Activated naive CD8-positive, alpha-beta T cell treated with anti-CD3 and anti-CD28 coated beads, Interleukin-2, amount 10 ng/mL, durations not matched to agents 7 days and 5 days (primary cell): ENCODE measurements at regions of chr1 and their contacts with region 1.

Region 1: DNA sequence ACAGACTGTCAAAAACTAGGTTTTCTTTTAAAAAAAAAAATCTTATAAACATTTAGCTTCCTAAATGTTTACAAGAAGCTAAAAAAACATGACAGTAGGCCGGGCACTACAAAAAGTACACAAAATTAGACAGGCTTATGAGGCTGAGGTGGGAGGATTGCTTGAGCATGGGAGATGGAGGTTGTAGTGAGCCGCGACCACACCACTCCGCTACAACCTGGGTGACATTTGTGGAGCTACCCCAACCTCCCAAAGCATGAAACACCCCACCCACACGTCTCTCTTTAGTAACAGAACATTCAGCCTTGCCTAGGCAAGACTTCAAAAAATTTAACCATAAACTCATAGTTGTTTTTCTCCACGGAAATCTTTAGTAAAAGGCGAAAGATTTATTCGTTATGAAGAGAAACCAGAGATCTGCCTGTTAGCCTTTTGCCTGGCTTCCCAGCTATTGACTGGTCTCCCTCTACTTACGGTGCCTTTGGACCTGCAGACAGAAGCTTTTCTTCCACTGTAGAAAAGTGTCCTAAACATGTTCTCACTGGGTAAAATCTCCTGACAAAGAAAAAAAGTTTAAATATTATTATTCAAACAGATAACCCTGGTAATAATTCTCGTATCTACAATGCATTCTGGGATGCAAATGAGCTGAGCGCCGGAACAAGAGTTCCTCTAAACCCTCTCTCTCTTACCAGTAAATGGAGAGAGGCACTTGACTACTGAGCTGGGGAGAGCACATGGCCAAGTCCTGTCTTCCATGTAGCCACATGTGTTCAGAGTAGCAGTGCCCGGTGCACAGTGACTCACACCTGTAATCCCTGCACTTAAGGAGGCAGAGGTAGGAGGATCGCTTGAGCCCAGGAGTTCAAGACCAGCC is 9.2 kb downstream of the RNU5D-1 start:
- DNase-seq: peak; percentile 65
- ATAC-seq: peak; percentile 89
- H3K4me3 Mint-ChIP-seq: peak overlapping the region; percentile 61
- H3K27ac Mint-ChIP-seq: peak overlapping the region; percentile 94
- H3K4me1 Mint-ChIP-seq: peaks cover 60% of the 10 kb centered on the region
- H3K27me3 Mint-ChIP-seq: no peaks in the 10 kb centered on the region

Region 2: DNA sequence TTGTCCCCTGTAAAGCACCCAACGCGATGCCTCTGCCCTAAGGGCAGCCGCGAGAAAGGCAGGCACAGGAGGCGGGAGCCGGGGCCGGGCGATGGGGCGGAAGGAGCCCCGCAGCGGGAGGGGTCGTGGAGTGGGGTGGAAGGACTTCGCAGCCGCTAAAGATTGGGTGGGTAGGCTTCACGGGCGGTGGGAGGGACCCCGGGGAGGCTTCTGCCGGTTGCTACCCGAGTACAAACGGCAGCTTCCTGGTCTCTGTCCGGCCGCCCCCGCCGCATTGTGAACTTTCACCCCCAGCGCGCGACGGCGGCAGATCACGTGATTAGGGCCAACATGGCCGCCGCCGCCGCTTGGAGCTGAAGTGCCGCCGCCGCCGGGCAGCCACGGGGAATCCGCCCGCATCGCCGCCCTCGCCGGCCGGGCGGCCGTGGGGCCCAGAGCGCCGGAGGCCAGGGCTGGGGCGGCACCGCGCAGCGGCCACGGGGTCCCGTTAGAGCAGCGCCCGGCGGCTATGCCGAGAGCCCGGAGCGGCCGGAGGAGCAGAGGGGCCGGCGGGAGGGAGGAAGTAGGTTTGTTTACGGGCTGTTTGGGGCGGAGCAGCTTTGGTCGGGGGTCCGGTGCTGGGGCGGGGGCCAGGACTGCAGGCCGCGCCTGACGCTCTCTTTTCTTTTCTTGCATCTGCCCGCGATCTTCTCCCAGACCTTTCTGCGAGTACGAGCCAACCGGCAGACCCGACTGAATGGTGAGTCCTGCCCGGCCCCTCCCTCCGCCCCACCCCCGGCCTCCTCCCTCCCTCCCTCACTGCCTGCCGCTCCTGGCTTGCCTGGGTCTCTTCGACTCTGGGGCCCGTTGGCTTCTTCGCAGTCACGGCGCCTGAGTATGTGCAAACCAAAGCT is 89.8 kb before region 1 on chr1:
- POLR2A ChIA-PET with region 1: interaction called, 23 read pairs
- DNase-seq: peak; percentile 95
- ATAC-seq: peak; percentile 76
- H3K4me3 Mint-ChIP-seq: peak overlapping the region; percentile 93
- H3K27ac Mint-ChIP-seq: peak overlapping the region; percentile 95
- H3K4me1 Mint-ChIP-seq: peaks cover 20% of the 10 kb centered on the region
- H3K27me3 Mint-ChIP-seq: no peaks in the 10 kb centered on the region

Region 3: GRCh38 chr1:44707959-44708831 is 13.5 kb before region 1 on chr1:
- POLR2A ChIA-PET with region 1: interaction called, 34 read pairs
- DNase-seq: no peak
- ATAC-seq: peak; percentile 68
- H3K4me3 Mint-ChIP-seq: peak overlapping the region; percentile 64
- H3K27ac Mint-ChIP-seq: peak overlapping the region; percentile 68
- H3K4me1 Mint-ChIP-seq: peaks cover 12% of the 10 kb centered on the region
- H3K27me3 Mint-ChIP-seq: peaks cover 15% of the 10 kb centered on the region

Region 4: DNA sequence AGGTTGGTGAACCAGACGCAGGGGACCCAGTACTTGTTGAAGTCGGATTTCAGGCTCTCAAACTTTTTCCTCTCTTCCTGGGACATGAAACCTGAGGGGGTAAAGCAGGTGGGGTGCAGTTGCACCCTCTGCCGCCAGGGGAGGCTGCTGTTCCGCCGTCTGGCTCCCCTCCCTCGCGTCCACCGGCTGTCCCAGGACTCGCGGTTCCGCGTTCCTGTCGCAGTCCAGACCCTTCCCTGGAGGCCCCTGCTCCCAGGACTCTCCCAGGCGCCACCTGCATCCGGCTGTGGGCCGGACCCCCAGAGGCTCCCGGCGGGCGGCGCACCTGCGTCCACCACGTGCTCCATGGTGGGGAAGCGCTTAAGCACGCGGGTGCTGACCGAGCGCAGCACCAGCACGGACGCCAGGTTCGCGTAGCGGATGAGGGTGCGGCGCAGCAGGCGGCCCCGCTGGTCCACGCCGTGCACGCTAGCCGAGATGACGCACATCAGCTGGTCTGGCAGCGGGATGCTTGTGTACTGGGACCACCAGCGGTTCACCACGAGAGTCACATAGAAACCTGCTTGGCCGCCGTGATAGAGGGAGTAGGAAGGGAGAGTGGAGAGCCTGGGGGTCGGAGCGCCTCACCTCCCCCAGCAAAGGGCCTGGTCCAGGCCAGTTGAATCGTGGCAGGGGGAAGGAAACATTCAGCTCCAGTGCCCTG is 64.6 kb after region 1 on chr1:
- POLR2A ChIA-PET with region 1: interaction called, 93 read pairs
- DNase-seq: peak; percentile 87
- ATAC-seq: peak; percentile 69
- H3K4me3 Mint-ChIP-seq: peak overlapping the region; percentile 66
- H3K27ac Mint-ChIP-seq: peak overlapping the region; percentile 71
- H3K4me1 Mint-ChIP-seq: peaks cover 26% of the 10 kb centered on the region
- H3K27me3 Mint-ChIP-seq: no peaks in the 10 kb centered on the region

Region 5: GRCh38 chr1:44807262-44808062 is 85.7 kb after region 1 on chr1 and contains the start of gene DYNLT4:
- POLR2A ChIA-PET with region 1: interaction called, 181 read pairs
- DNase-seq: peak; percentile 84
- ATAC-seq: peak; percentile 61
- H3K4me3 Mint-ChIP-seq: peak within 1 kb of the TSS; percentile 78
- H3K27ac Mint-ChIP-seq: peak within 1 kb of the TSS; percentile 99
- H3K4me1 Mint-ChIP-seq: peaks cover 55% of the 10 kb centered on the region
- H3K27me3 Mint-ChIP-seq: no peaks in the 10 kb centered on the region
- total RNA-seq, gene DYNLT4: 0.43 to 0.97 TPM

Region 6: DNA sequence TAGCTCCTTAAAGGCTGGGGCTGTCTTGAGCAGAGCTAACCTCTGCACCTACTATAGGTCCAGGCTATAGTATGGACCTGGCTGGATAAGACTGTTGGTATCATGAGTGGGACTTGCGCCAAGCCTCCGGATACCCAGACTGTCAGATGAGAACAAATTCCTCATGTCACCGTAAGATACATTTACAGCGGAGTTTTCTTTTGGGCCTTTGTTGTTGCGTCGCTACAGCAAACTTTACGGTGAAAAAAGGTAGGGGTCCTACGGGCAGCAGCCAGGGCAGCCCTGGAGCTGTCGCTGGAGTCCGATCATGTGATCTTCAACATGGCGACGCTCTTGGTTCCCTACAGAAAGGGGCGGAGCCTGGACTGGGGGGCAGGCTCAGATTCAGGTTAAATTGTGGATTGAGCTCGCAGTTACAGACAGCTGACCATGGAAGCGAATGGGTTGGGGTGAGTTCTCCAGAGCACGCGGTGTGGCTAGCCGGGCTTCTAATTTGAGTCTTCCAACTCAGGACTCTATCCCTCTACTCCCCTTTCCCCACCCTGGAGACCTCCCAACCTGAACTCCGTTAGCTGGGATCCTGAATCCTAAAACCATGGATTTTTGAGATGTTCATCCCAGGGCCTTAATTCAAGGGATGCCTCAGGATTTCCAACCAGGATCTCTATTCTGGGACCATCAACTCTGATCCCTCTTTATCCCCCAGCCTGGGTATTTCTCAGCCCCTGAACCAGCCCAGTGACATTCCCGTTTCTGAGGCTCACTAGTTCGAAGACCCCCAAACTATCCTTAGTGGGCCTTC is 290.3 kb after region 1 on chr1 and contains the start of gene UROD:
- POLR2A ChIA-PET with region 1: interaction called, 51 read pairs
- DNase-seq: peak; percentile 86
- ATAC-seq: peak; percentile 71
- H3K4me3 Mint-ChIP-seq: peak within 1 kb of the TSS; percentile 89
- H3K27ac Mint-ChIP-seq: peak within 1 kb of the TSS; percentile 97
- H3K4me1 Mint-ChIP-seq: peaks cover 29% of the 10 kb centered on the region
- H3K27me3 Mint-ChIP-seq: no peaks in the 10 kb centered on the region
- total RNA-seq, gene UROD: 71.7 to 79.2 TPM

Region 7: GRCh38 chr1:45258059-45258650 is 536.4 kb after region 1 on chr1:
- POLR2A ChIA-PET with region 1: no interaction called
- DNase-seq: no peak
- ATAC-seq: no peak
- H3K4me3 Mint-ChIP-seq: no peak overlapping the region
- H3K27ac Mint-ChIP-seq: no peak overlapping the region
- H3K4me1 Mint-ChIP-seq: no peaks in the 10 kb centered on the region
- H3K27me3 Mint-ChIP-seq: no peaks in the 10 kb centered on the region

Region 8: GRCh38 chr1:45490626-45491486 is 769.1 kb after region 1 on chr1 and contains the start of gene TESK2:
- POLR2A ChIA-PET with region 1: interaction called, 10 read pairs
- DNase-seq: peak; percentile 96
- ATAC-seq: peak; percentile 94
- H3K4me3 Mint-ChIP-seq: no peak within 1 kb of the TSS
- H3K27ac Mint-ChIP-seq: no peak within 1 kb of the TSS
- H3K4me1 Mint-ChIP-seq: peaks cover 9% of the 10 kb centered on the region
- H3K27me3 Mint-ChIP-seq: no peaks in the 10 kb centered on the region
- total RNA-seq, gene TESK2: 5.8 to 6.5 TPM